ENCODE measurements at regions of chr22 and their contacts with region 1.

Region 1: GRCh38 chr22:36144886-36145541 is 15.5 kb downstream of the APOL3 start:
- DNase-seq: peak; percentile 53
- H3K4me3 Mint-ChIP-seq: no peak overlapping the region
- H3K27ac Mint-ChIP-seq: peak overlapping the region; percentile 39
- H3K4me1 Mint-ChIP-seq: no peaks in the 10 kb centered on the region
- H3K27me3 Mint-ChIP-seq: no peaks in the 10 kb centered on the region

Region 2: GRCh38 chr22:36160499-36160942 is 15.5 kb after region 1 on chr22 and contains the start of gene APOL3:
- CTCF ChIA-PET with region 1: interaction called, 11 read pairs
- DNase-seq: peak; percentile 77
- H3K4me3 Mint-ChIP-seq: peak within 1 kb of the TSS; percentile 99
- H3K27ac Mint-ChIP-seq: peak within 1 kb of the TSS; percentile 93
- H3K4me1 Mint-ChIP-seq: peaks cover 89% of the 10 kb centered on the region
- H3K27me3 Mint-ChIP-seq: peaks cover under 1% of the 10 kb centered on the region

Measured in activated naive CD4-positive, alpha-beta T cell treated with anti-CD3 and anti-CD28 coated beads, Interleukin-2, amount 10 ng/mL, durations not matched to agents 7 days and 5 days (primary cell).